Posterior cingulate gyrus (tissue), 11 donors: ENCODE measurements at regions of chr20 and their contacts with region 1.

Region 1: GRCh38 chr20:33211817-33212424 is 5.2 kb upstream of the BPIFA3 start:
- DNase-seq: peak in 6 of 10 donors; percentile 9 to 87 (median 46)

Region 2: DNA sequence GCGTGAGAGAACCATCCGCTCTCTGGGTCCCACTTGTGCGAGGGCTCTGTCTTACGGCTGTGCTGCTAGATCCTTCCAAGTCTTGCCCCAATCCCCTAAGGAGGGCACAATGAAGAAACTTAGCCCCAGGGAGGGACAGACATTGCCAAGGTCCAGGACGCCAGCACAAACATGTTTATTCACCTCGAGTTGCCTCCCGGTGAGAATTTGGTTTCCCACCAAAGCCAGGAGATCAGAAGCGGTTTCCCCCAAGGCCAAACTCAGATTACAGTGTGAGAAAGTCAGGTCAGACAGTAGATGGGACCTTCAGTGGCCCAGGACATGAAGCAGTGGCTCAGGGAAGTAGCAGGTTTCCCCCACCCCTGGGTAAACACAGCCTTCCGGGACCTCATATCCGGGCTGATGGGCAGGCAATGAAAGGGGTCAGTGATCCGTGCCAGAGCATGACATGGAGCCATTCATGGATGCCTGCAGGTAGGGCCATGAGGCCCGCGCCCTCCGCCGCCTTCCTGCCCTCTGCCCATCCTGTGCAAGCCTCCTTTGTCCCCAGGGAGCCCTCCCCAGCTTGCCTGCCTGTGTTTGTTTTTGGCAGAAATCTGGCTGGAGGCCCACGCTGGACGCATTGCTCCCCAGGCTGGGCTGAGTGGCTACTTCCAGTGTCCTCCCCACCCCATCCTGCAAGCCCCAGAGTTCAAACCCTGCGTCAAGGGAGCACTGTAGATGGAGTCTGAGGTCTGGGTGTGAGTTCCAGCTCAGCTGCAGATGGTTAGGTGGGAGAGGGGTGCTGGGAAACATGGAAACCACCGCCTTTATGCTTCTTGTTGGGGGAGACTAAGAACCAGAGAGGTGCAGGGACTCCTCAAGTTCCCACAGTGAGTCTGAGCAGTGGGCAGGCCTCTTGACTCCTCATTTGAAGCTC is 202.4 kb before region 1 on chr20:
- intact Hi-C with region 1: loop called (anchors 10 kb)
- DNase-seq: peak in 2 of 10 donors; percentile 6 to 81